T-cell (primary cell): ENCODE measurements at regions of chr11 and their contacts with region 1.

Region 1: GRCh38 chr11:18115360-18116127 is 9.7 kb upstream of the SAAL1 start:
- DNase-seq: peak; percentile 10 to 80 (median 52)
- ATAC-seq: peak; percentile 85 to 88 (median 86)
- H3K4me3 ChIP-seq: no peak overlapping the region
- H3K4me3 Mint-ChIP-seq: no peak overlapping the region
- H3K27ac ChIP-seq: no peak overlapping the region
- H3K27ac Mint-ChIP-seq: no peak overlapping the region
- H3K4me1 ChIP-seq: no peaks in the 10 kb centered on the region
- H3K4me1 Mint-ChIP-seq: peaks cover 0 to 4% (median 3%) of the 10 kb centered on the region in 3 donors
- H3K27me3 ChIP-seq: peaks cover 0 to 15% of the 10 kb centered on the region in 2 experiments
- H3K27me3 Mint-ChIP-seq: peaks cover 25 to 37% of the 10 kb centered on the region in 2 donors

Region 2: DNA sequence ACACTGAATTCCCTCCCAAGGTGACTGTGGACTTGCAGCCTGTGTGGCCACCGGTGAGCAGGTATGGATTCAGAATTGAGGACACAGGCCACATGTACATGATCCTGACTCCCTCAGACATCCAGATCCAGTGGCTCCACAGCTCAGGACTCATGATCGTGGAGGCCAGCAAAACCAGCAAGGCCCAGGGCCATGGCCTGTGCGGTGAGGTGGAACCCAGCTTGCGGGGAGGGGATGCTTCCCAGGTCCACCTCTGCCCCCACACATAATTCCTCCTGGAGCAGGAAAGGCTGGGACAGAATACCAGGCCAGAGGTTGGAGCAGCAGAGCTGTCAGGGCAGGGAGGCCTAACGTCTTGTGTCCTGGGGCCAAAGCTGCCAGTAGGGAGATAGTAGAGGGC is 486.4 kb before region 1 on chr11:
- CTCF ChIA-PET with region 1: no interaction called
- POLR2A ChIA-PET with region 1: no interaction called
- DNase-seq: no peak
- ATAC-seq: no peak
- H3K4me3 ChIP-seq: no peak overlapping the region
- H3K4me3 Mint-ChIP-seq: no peak overlapping the region
- H3K27ac ChIP-seq: no peak overlapping the region
- H3K27ac Mint-ChIP-seq: no peak overlapping the region
- H3K4me1 ChIP-seq: no peaks in the 10 kb centered on the region
- H3K4me1 Mint-ChIP-seq: no peaks in the 10 kb centered on the region
- H3K27me3 ChIP-seq: peaks cover 0 to 17% of the 10 kb centered on the region in 2 experiments
- H3K27me3 Mint-ChIP-seq: peaks cover 40 to 44% of the 10 kb centered on the region in 2 donors

Region 3: GRCh38 chr11:18203723-18204122 is 88.2 kb after region 1 on chr11:
- CTCF ChIA-PET with region 1: no interaction called
- POLR2A ChIA-PET with region 1: no interaction called
- DNase-seq: no peak
- ATAC-seq: no peak
- H3K4me3 ChIP-seq: no peak overlapping the region
- H3K4me3 Mint-ChIP-seq: no peak overlapping the region
- H3K27ac ChIP-seq: no peak overlapping the region
- H3K27ac Mint-ChIP-seq: no peak overlapping the region
- H3K4me1 ChIP-seq: no peaks in the 10 kb centered on the region
- H3K4me1 Mint-ChIP-seq: no peaks in the 10 kb centered on the region
- H3K27me3 ChIP-seq: peaks cover 0 to 31% of the 10 kb centered on the region in 2 experiments
- H3K27me3 Mint-ChIP-seq: peaks cover 52 to 60% of the 10 kb centered on the region in 2 donors

Region 4: GRCh38 chr11:18221274-18221876 is 105.8 kb after region 1 on chr11:
- CTCF ChIA-PET with region 1: no interaction called
- POLR2A ChIA-PET with region 1: no interaction called
- DNase-seq: no peak
- ATAC-seq: no peak
- H3K4me3 ChIP-seq: no peak overlapping the region
- H3K4me3 Mint-ChIP-seq: no peak overlapping the region
- H3K27ac ChIP-seq: no peak overlapping the region
- H3K27ac Mint-ChIP-seq: no peak overlapping the region
- H3K4me1 ChIP-seq: no peaks in the 10 kb centered on the region
- H3K4me1 Mint-ChIP-seq: no peaks in the 10 kb centered on the region
- H3K27me3 ChIP-seq: peaks cover 0 to 3% of the 10 kb centered on the region in 2 experiments
- H3K27me3 Mint-ChIP-seq: peaks cover 11% of the 10 kb centered on the region in 2 donors

Region 5: DNA sequence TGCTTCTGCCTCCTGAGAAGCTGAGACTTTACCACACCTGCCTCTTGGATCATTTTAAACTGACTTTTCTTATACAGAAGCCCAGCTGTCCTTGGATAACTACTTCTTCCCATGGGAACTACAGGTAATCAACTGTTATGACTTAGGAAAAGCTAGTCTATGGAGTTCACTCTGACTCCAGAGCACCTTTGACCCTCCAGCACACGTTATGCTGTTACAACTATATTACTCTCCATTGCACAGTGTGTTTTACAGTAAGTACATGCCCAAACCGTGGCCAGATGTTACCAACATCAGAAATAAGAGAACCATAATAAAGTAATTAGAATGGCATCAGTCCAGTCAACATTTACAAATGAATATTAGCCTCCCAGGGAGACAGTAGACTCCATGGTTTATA is 432.5 kb after region 1 on chr11:
- CTCF ChIA-PET with region 1: no interaction called
- POLR2A ChIA-PET with region 1: interaction called in 1 of 2 experiments, 11 read pairs
- DNase-seq: no peak
- ATAC-seq: no peak
- H3K4me3 ChIP-seq: no peak overlapping the region
- H3K4me3 Mint-ChIP-seq: no peak overlapping the region
- H3K27ac ChIP-seq: no peak overlapping the region
- H3K27ac Mint-ChIP-seq: no peak overlapping the region
- H3K4me1 ChIP-seq: no peaks in the 10 kb centered on the region
- H3K4me1 Mint-ChIP-seq: no peaks in the 10 kb centered on the region
- H3K27me3 ChIP-seq: no peaks in the 10 kb centered on the region
- H3K27me3 Mint-ChIP-seq: no peaks in the 10 kb centered on the region

Region 6: DNA sequence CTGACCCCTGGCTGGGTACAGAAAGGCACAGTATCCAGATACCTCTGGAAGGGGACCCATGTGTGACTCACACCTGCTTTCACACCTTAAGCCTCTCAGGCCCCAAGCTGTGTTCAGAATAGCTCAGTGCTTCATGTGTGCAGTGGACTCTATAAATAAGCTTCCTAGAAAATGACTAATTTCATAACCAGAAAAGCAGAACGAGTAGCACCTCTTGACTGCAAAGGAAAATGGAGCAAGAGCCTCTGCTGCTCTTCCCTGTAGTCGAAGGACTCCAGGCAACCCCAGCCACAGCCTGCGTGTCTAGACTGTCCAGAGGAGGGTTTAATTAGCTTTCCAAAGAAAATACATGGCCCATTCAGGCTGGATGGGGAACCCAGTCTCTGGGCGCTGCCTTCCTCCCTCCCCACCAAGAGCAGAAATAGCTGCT is 652.9 kb after region 1 on chr11:
- CTCF ChIA-PET with region 1: interaction called, 8 to 10 read pairs
- POLR2A ChIA-PET with region 1: no interaction called
- DNase-seq: no peak
- ATAC-seq: no peak
- H3K4me3 ChIP-seq: no peak overlapping the region
- H3K4me3 Mint-ChIP-seq: no peak overlapping the region
- H3K27ac ChIP-seq: no peak overlapping the region
- H3K27ac Mint-ChIP-seq: no peak overlapping the region
- H3K4me1 ChIP-seq: no peaks in the 10 kb centered on the region
- H3K4me1 Mint-ChIP-seq: peaks cover 0 to 7% (median 5%) of the 10 kb centered on the region in 3 donors
- H3K27me3 ChIP-seq: peaks cover 0 to 34% of the 10 kb centered on the region in 2 experiments
- H3K27me3 Mint-ChIP-seq: peaks cover 19 to 21% of the 10 kb centered on the region in 2 donors